ENCODE measurements at regions of chr1 and their contacts with region 1.

Region 1: DNA sequence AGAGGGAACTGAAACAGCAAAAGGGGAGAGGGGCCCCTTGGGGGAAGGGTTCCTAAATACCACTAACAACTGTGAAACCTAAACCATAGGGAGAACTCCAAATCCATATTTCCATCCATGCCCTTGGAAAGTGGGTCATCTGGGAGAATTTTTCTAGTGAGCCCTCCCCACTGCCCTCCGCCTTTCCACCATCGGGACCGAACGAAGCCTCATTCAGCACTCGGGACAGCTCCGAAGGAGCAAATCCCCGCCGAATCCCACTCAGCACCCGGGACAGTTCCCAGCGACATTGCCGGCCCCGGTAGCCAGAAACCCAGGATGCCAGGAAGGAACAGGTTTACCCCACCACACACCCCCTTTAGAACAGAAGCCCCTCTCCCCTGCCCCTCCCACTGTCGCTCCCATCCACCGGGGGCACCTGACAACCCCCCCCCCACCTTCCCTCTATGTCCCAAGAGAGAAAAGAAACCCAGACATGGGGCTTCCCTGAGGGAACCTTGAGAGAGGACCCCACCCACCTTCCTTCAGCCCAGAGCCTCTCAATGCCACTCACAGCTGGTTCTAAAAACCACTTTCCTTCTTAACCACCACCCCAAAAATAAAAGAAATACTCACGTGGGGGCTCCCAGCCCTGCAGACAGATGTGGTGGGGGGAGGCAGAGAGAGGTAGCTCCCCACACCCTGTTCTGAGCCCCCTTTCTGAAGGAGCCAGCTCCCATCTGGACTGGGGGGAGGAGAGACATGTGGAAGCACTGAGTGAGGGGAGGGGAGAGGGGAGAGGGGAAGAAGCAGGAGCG is 4.5 kb downstream of the DLGAP3 start:
- DNase-seq: peak; percentile 83
- ATAC-seq: peak; percentile 63

Region 2: GRCh38 chr1:33244143-33244820 is 1680.7 kb before region 1 on chr1:
- intact Hi-C with region 1: no loop called
- DNase-seq: no peak
- ATAC-seq: peak; percentile 82

Region 3: DNA sequence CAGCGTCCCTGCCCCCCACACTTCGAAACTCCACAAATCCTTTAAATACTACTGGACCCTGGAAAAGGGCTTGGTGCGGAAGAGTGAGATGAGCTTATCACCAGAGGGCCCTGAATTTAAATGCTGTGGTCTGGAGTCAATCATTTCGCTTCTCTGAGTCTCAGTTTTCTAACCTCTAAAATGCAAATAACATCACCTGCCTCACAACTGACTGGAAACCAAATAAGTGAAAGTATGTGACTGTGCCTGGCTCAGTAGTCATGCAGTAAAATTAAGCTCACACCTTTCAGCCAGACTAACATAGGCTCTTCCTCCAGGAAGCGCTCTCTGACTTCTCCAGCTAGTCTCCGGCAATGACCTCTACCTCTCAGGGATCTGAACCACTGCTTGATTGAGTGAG is 128.0 kb before region 1 on chr1:
- intact Hi-C with region 1: no loop called
- DNase-seq: no peak
- ATAC-seq: no peak

Region 4: DNA sequence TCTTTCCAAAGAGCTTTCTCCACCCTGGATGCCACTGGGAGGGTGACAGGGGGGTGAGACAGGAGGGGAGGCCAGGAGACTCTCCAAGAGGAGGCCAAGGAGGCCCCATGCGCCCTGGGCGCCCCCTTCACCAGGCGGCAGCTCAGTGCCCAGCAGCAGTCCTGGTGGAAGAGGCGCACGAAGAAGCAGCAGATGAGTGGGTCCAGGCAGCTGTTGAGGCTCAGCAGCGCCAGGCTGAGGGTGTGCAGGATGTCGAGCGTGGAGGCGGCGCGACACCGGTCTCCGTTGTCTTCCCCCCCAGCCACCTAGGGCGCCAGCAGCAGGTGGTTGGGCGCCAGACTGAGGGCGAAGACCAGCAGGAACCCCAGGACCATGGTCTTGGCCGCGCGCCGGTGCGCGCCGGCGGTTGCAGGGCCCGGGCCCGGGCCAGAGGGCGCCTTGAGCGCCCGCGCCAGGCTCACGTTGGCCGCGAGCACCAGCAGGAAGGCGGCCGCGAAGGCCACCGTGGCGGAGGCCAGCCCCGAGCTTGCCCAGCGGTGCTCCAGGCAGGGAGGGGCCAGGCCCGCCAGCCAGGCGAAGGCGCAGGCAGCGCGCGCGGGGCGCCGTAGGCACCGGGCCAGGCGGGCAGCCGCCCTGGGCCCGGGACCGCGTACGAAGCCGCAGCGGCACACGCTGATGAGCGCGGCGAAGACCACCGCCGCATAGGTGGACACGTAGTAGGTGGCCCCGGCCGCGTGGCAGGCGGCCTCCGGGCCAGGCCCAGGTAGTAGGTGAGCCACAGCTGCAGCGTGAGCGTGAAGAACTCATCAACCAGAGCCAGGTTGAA is 51.6 kb after region 1 on chr1:
- intact Hi-C with region 1: loop called (anchors 2 kb)
- DNase-seq: no peak
- ATAC-seq: no peak

Measured in sciatic nerve (tissue), 2 donors.